ENCODE measurements at regions of chr6 and their contacts with region 1.

Region 1: GRCh38 chr6:163617549-163617948 is 203.0 kb downstream of the QKI start:
- DNase-seq: no peak

Region 2: DNA sequence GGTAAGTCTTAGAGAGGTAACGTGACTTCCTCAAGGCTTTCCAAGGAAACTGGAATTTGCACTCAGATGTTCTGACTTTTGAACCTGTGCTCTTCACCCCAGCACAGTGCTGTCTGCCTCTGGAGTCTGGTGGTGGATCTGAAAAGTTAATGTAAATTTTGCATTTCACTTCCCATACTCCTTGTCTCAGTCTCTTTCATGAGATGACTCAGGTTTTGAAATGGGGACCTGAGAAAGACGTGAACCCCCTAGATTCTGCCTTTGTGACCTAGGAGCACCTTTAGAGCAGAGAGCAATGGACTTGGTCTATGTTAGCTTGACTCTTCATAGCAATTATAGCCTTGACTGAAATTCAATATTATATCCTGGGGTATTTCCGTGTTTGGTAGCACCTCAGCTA is 20.0 kb after region 1 on chr6:
- intact Hi-C with region 1: loop called in 1 of 2 experiments (anchors 1 kb)
- DNase-seq: no peak

Region 3: GRCh38 chr6:163725008-163725941 is 107.7 kb after region 1 on chr6:
- intact Hi-C with region 1: no loop called
- DNase-seq: no peak